ENCODE measurements at regions of chr14 and their contacts with region 1.

Region 1: DNA sequence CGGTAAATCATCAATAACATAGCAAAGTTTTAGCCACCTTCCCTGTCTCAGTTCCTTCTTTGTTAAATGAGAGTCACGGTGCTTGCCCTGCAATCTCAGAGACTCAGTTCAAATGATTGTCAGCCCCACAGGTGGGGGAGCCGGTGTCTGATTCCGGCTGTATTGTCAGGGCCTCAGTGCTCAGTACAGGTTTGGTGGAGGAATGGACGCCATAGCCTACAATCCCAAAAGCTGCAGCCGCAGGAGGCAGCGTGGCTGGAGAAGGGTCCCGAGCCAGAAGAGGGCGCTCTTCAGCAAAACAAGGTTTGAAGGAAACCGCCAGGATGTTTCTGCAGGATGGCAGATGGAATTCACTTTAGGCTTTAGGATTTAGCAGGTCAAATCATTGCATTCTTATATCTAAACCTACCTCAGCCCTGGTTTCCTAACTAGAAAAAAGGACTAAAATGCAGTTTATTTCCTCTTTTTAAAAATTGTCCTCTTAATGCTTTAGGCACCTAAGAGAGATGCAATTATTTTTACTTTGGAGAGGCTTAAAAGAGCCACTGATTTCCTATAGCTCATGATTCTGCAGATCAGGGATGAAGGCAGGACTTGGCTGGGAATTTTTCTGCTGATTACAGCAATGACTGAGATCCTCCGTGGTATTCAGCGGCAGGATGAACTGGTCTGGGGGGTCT is 29.2 kb downstream of the FOS start:
- DNase-seq: peak; percentile 75
- H3K4me3 Mint-ChIP-seq: no peak overlapping the region
- H3K27ac Mint-ChIP-seq: no peak overlapping the region
- H3K4me1 Mint-ChIP-seq: peaks cover 18% of the 10 kb centered on the region
- H3K27me3 Mint-ChIP-seq: no peaks in the 10 kb centered on the region

Region 2: DNA sequence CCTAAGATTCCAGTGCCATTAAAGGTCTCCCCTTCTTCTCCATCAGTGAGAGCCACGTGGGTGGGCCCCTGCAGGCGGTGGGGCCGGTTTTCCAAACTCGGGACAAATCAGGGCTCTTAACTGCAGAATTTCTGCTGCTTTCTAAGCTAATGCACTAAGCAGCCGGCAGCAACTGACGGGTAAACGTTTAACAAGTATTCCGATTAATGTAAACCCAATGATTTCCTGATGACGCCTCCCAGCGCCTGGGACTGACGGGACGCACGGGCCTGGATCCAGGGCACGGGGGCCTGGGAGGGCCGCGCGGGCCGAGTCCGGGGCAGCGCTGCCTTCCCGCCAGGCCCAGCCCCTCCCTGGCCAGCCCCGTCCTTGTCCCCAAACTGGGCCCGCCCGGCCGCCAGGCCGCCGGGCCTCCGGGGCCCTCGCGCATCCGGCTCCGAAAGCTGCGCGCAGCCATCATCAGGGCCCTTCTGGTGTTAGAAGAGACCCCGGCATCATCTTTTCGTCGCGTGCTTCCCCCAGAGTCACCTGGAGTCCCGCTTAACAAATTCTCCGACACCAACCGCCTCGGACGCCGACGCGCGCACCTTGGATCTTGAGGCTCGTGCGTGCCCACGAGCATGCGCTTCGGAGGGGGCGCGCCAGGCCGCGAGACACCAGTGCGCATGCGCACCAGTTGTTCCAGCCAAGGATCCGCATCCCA is 256.8 kb before region 1 on chr14 and contains the start of gene MLH3:
- CTCF ChIA-PET with region 1: no interaction called
- POLR2A ChIA-PET with region 1: no interaction called
- DNase-seq: peak; percentile 76
- H3K4me3 Mint-ChIP-seq: peak within 1 kb of the TSS; percentile 86
- H3K27ac Mint-ChIP-seq: peak within 1 kb of the TSS; percentile 93
- H3K4me1 Mint-ChIP-seq: peaks cover 70% of the 10 kb centered on the region
- H3K27me3 Mint-ChIP-seq: no peaks in the 10 kb centered on the region
- total RNA-seq, gene MLH3: 17.0 to 17.3 TPM

Region 3: GRCh38 chr14:75126679-75127473 is 181.0 kb before region 1 on chr14 and contains the start of gene NEK9:
- CTCF ChIA-PET with region 1: interaction called, 40 read pairs
- POLR2A ChIA-PET with region 1: no interaction called
- DNase-seq: peak; percentile 92
- H3K4me3 Mint-ChIP-seq: peak within 1 kb of the TSS; percentile 98
- H3K27ac Mint-ChIP-seq: peak within 1 kb of the TSS; percentile 99
- H3K4me1 Mint-ChIP-seq: peaks cover 39% of the 10 kb centered on the region
- H3K27me3 Mint-ChIP-seq: no peaks in the 10 kb centered on the region
- total RNA-seq, gene NEK9: 74.9 to 81.6 TPM

Region 4: GRCh38 chr14:75249251-75249957 is 58.4 kb before region 1 on chr14:
- CTCF ChIA-PET with region 1: no interaction called
- POLR2A ChIA-PET with region 1: no interaction called
- DNase-seq: peak; percentile 94
- H3K4me3 Mint-ChIP-seq: peak overlapping the region; percentile 15
- H3K27ac Mint-ChIP-seq: peak overlapping the region; percentile 84
- H3K4me1 Mint-ChIP-seq: peaks cover 54% of the 10 kb centered on the region
- H3K27me3 Mint-ChIP-seq: peaks cover 44% of the 10 kb centered on the region

Region 5: GRCh38 chr14:75278422-75279161 is 29.2 kb before region 1 on chr14 and contains the start of gene FOS:
- CTCF ChIA-PET with region 1: no interaction called
- POLR2A ChIA-PET with region 1: no interaction called
- DNase-seq: peak; percentile 93
- H3K4me3 Mint-ChIP-seq: peak within 1 kb of the TSS; percentile 77
- H3K27ac Mint-ChIP-seq: peak within 1 kb of the TSS; percentile 96
- H3K4me1 Mint-ChIP-seq: peaks cover 44% of the 10 kb centered on the region
- H3K27me3 Mint-ChIP-seq: peaks cover 76% of the 10 kb centered on the region
- total RNA-seq, gene FOS: 28.0 to 35.7 TPM

Region 6: DNA sequence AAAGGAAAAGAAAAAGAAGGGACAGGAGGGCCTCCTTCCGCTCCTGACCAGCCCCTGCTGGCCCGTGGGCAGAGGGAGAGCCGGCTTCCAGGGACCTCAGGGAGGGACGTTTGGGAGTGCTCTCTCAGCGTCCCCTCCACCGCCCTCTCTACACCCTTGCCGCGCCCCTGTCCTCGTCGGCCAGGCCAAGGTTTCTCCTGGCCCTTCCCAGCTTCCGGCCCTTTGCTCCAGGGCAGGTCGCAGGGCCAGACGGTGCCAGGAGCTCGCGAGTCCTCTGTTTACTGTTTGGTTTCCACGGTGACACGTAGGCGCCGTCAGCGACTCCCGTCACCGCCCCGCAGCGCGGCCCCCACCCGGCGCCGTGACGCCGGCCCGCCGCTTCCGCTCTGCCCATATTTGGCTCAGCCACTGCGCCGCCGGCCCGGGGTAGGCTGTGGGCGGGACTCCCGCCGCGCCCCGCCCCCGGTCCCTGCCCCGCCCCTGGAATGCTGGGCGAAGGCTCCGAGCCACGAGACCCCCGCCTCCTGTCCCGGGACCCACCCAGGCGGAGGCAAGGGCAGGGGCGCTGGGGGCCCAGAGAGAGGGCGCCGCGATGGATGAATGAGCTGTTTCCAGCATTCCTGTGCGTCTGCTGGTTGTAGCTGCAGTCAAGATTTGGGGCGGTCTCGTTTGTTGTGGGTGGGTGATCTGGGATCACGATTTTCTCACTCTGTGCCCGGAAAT is 13.8 kb before region 1 on chr14:
- CTCF ChIA-PET with region 1: interaction called, 15 read pairs
- POLR2A ChIA-PET with region 1: no interaction called
- DNase-seq: peak; percentile 94
- H3K4me3 Mint-ChIP-seq: peak overlapping the region; percentile 75
- H3K27ac Mint-ChIP-seq: peak overlapping the region; percentile 87
- H3K4me1 Mint-ChIP-seq: peaks cover 23% of the 10 kb centered on the region
- H3K27me3 Mint-ChIP-seq: peaks cover 21% of the 10 kb centered on the region

Region 7: GRCh38 chr14:75389679-75390078 is 81.8 kb after region 1 on chr14:
- CTCF ChIA-PET with region 1: no interaction called
- POLR2A ChIA-PET with region 1: no interaction called
- DNase-seq: no peak
- H3K4me3 Mint-ChIP-seq: no peak overlapping the region
- H3K27ac Mint-ChIP-seq: no peak overlapping the region
- H3K4me1 Mint-ChIP-seq: no peaks in the 10 kb centered on the region
- H3K27me3 Mint-ChIP-seq: peaks cover 41% of the 10 kb centered on the region

Region 8: GRCh38 chr14:75487155-75487671 is 179.4 kb after region 1 on chr14:
- CTCF ChIA-PET with region 1: interaction called, 12 read pairs
- POLR2A ChIA-PET with region 1: no interaction called
- DNase-seq: peak; percentile 31
- H3K4me3 Mint-ChIP-seq: no peak overlapping the region
- H3K27ac Mint-ChIP-seq: peak overlapping the region; percentile 34
- H3K4me1 Mint-ChIP-seq: peaks cover 35% of the 10 kb centered on the region
- H3K27me3 Mint-ChIP-seq: no peaks in the 10 kb centered on the region